ENCODE measurements at regions of chr14 and their contacts with region 1.

Region 1: GRCh38 chr14:100155042-100155846 is 4.2 kb downstream of the DEGS2 start:
- DNase-seq: peak; percentile 64
- H3K4me3 ChIP-seq: no peak overlapping the region; a peak in 1 of 4 replicates
- H3K27ac ChIP-seq: peak overlapping the region in 1 of 2 experiments; percentile 14; a peak in 1 of 4 replicates
- H3K4me1 ChIP-seq: peaks cover 0 to 28% of the 10 kb centered on the region in 2 experiments; a peak in 2 of 4 replicates
- H3K27me3 ChIP-seq: peaks cover 6% of the 10 kb centered on the region
- CTCF ChIP-seq: peak; percentile 58
- EP300 ChIP-seq: no peak
- RAD21 ChIP-seq: no peak

Region 2: DNA sequence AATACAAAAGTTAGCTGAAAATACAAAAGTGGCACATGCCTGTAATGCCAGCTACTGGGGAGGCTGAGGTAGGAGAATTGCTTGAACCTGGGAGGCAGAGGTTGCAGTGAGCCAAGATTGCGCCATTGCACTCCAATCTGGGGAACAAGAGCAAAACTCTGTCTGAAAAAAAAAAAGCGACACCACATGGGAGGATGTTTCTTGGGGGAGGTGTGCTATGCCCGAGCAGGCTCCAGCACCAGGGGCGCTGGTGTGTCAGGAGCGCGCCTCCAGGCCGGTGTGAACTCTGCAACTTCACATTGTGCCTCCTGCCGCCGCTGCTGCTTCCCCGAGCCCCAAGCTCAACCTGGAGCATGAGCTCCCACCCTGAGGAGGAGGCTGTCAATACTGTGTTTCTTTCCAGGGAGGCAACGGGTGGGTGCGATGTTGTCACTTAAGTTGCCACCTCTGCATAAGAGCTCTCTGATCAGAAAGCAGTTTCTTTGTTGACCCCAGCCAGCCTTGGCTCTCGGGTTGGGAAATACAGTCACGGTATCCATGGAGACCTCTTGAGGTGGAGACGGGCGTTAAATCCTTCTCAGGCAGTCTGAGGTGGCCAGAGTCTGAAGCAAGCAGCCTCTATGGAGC is 14.7 kb before region 1 on chr14:
- CTCF ChIA-PET with region 1: interaction called, 36 read pairs
- POLR2A ChIA-PET with region 1: interaction called, 10 read pairs
- DNase-seq: no peak
- H3K4me3 ChIP-seq: no peak overlapping the region
- H3K27ac ChIP-seq: peak overlapping the region in 1 of 2 experiments; percentile 96; a peak in 1 of 4 replicates
- H3K4me1 ChIP-seq: peaks cover 0 to 44% of the 10 kb centered on the region in 2 experiments; a peak in 1 of 4 replicates
- H3K27me3 ChIP-seq: no peaks in the 10 kb centered on the region
- CTCF ChIP-seq: no peak
- EP300 ChIP-seq: no peak
- RAD21 ChIP-seq: no peak